Endothelial cell of umbilical vein (primary cell): ENCODE measurements at regions of chr4 and their contacts with region 1.

Region 1: GRCh38 chr4:52588097-52588782 is 70.9 kb downstream of the USP46 start:
- DNase-seq: peak; percentile 67
- H3K4me3 ChIP-seq: no peak overlapping the region
- H3K27ac ChIP-seq: peak overlapping the region; percentile 96
- H3K4me1 ChIP-seq: peaks cover 17% of the 10 kb centered on the region
- H3K27me3 ChIP-seq: no peaks in the 10 kb centered on the region
- CTCF ChIP-seq: peak; percentile 55 to 73
- POLR2A ChIP-seq: no peak

Region 2: GRCh38 chr4:52643785-52644244 is 55.6 kb after region 1 on chr4:
- CTCF ChIA-PET with region 1: interaction called, 9 read pairs
- POLR2A ChIA-PET with region 1: no interaction called
- dilution Hi-C with region 1: no loop called
- intact Hi-C with region 1: loop called (anchors 1 kb)
- DNase-seq: peak; percentile 44
- H3K4me3 ChIP-seq: no peak overlapping the region
- H3K27ac ChIP-seq: no peak overlapping the region
- H3K4me1 ChIP-seq: peaks cover 33% of the 10 kb centered on the region
- H3K27me3 ChIP-seq: no peaks in the 10 kb centered on the region
- CTCF ChIP-seq: no peak
- POLR2A ChIP-seq: no peak

Region 3: GRCh38 chr4:52665592-52665991 is 77.4 kb after region 1 on chr4:
- CTCF ChIA-PET with region 1: interaction called, 23 read pairs
- POLR2A ChIA-PET with region 1: no interaction called
- dilution Hi-C with region 1: no loop called
- intact Hi-C with region 1: no loop called
- DNase-seq: peak; percentile 47
- H3K4me3 ChIP-seq: no peak overlapping the region
- H3K27ac ChIP-seq: no peak overlapping the region
- H3K4me1 ChIP-seq: peaks cover 4% of the 10 kb centered on the region
- H3K27me3 ChIP-seq: peaks cover 6% of the 10 kb centered on the region in 2 experiments
- CTCF ChIP-seq: peak in 1 of 2 donors; percentile 9
- POLR2A ChIP-seq: no peak

Region 4: DNA sequence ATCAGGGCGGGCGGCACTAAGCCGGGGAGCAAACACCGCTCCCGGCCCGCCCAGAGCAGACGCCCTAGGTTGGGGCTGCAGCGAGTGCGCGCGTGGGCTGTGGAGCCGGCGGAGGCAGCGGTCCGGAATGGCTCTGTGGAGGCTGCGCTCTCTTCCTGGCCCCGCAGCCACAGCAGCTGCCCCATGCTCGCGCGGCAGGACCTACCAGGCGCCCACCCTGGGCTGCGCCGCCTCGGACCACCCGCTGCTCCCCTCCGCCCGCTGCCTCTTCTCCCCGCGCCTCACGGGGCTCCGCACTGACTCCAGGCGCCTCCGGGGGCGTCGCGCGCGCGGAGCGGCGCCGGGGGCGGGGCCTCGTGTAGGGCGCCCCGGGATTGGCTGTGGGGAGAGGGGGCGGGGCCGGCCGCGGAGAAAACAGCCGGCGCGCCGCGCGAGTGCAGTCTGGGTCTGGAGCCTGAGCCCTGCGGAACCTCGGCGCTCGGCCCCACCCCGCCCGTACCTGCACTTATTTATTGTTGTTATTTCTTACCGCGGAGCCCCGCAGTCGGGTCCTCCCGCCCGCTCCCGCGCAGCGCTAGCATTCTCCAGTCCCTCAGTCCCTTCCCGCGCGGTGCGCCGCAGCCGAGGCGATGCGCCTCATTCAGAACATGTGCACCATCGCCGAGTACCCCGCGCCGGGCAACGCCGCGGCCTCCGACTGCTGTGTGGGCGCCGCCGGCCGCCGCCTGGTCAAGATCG is 273.8 kb after region 1 on chr4 and contains the start of gene RASL11B:
- CTCF ChIA-PET with region 1: interaction called, 5 read pairs
- POLR2A ChIA-PET with region 1: no interaction called
- dilution Hi-C with region 1: no loop called
- intact Hi-C with region 1: loop called (anchors 2 kb)
- DNase-seq: peak; percentile 78
- H3K4me3 ChIP-seq: peak within 1 kb of the TSS; percentile 5 to 50 (median 38)
- H3K27ac ChIP-seq: no peak within 1 kb of the TSS
- H3K4me1 ChIP-seq: peaks cover 9% of the 10 kb centered on the region
- H3K27me3 ChIP-seq: peaks cover 32 to 55% of the 10 kb centered on the region in 2 experiments
- CTCF ChIP-seq: no peak
- POLR2A ChIP-seq: no peak
- total RNA-seq, gene RASL11B: not detected in 2 replicates

Region 5: GRCh38 chr4:54277691-54278090 is 1689.5 kb after region 1 on chr4:
- CTCF ChIA-PET with region 1: no interaction called
- POLR2A ChIA-PET with region 1: no interaction called
- dilution Hi-C with region 1: no loop called
- intact Hi-C with region 1: loop called (anchors 5 kb)
- DNase-seq: peak; percentile 92
- H3K4me3 ChIP-seq: peak overlapping the region in 1 of 3 experiments; percentile 14
- H3K27ac ChIP-seq: peak overlapping the region; percentile 5
- H3K4me1 ChIP-seq: peaks cover 45% of the 10 kb centered on the region
- H3K27me3 ChIP-seq: peaks cover 8 to 13% of the 10 kb centered on the region in 2 experiments
- CTCF ChIP-seq: no peak
- POLR2A ChIP-seq: no peak